Activated CD8-positive, alpha-beta T cell treated with anti-CD3 and anti-CD28 coated beads, Interleukin-2, amount 10 ng/mL, durations not matched to agents 7 days and 5 days (primary cell): ENCODE measurements at regions of chr6 and their contacts with region 1.

Region 1: DNA sequence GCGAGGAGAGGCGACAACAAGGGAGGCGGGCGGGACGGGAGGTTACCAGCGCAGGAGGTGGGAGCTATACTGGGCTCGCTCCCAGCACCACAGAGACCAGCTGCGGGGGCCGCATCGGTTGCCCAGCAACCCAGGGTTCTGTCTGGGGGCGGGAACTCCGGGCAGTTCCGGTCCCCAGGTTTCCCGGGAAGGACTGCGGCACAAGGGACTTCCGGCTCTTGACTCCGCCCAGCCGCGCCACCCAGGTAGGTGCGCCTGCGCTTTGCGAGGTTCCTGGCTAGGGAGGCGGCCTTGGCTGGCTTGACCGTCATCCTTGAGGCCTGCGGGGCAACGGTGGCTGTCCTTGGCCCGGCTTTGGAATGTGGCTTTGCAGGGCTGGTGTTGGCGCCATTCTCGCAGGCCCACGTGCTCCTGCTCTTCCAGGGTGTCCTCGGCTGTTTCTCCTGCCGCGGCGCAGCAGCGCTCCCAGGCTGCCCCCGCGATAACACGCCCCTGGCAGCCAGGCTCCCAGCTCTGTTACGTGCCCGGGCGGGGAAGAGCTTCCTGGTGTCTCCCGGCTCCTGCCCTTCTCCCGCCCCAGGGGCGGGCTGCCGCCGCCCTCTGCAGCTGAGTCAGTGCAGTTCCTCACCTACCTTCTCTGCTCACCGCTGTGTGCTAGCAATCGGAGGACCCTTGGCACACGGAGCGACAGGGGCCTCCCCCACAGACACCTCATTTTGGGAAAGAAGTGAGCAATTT is at the start of gene RSPH3:
- DNase-seq: peak; percentile 93
- ATAC-seq: peak; percentile 94
- H3K4me3 Mint-ChIP-seq: peak within 1 kb of the TSS; percentile 89
- H3K27ac Mint-ChIP-seq: peak within 1 kb of the TSS; percentile 81
- H3K4me1 Mint-ChIP-seq: peaks cover 35% of the 10 kb centered on the region
- H3K27me3 Mint-ChIP-seq: no peaks in the 10 kb centered on the region
- total RNA-seq, gene RSPH3: 1.4 TPM

Region 2: GRCh38 chr6:158242071-158242606 is 757.7 kb before region 1 on chr6:
- CTCF ChIA-PET with region 1: no interaction called
- POLR2A ChIA-PET with region 1: no interaction called
- DNase-seq: no peak
- ATAC-seq: peak; percentile 23
- H3K4me3 Mint-ChIP-seq: no peak overlapping the region
- H3K27ac Mint-ChIP-seq: peak overlapping the region; percentile 69
- H3K4me1 Mint-ChIP-seq: peaks cover 23% of the 10 kb centered on the region
- H3K27me3 Mint-ChIP-seq: no peaks in the 10 kb centered on the region

Region 3: DNA sequence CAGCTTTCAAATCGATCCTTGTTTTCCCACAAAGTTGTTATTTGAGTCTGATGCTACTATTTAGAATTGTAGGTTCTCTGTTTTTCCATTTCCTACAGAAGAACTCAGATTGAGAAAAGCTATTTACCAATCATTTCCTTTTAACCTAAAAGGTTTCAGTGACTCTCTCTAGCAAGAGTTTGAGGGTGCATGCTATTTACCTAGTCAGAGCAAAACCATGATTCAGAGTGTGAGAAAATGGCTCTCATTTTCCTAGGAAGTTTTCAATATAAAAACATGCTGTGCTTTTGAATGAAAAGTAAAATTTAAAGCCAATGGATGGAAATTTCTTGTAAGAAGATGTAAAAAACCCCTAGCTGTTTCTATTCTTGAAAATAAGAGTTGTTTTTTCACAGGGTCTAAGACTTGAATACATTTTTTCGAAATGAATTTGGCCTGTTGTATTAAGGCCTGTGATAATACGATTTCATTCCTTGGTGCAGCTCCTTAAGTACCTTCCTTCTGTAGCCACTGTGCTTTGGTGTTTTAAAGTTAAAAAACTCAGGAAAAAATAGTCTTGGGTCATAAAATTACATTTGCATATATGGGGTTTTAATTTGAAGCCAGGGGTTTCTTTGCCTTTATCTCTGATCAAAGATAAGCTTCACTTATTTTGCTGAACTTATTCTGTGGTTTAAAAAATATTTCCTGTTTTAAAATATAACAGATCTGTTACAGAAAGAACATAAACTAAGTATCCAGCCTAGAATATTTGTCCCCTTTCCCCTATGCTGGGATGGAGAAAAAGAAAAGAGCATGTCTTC is 18.1 kb after region 1 on chr6:
- CTCF ChIA-PET with region 1: interaction called, 10 read pairs
- POLR2A ChIA-PET with region 1: no interaction called
- DNase-seq: peak; percentile 12
- ATAC-seq: peak; percentile 71
- H3K4me3 Mint-ChIP-seq: no peak overlapping the region
- H3K27ac Mint-ChIP-seq: peak overlapping the region; percentile 52
- H3K4me1 Mint-ChIP-seq: peaks cover 29% of the 10 kb centered on the region
- H3K27me3 Mint-ChIP-seq: no peaks in the 10 kb centered on the region

Region 4: DNA sequence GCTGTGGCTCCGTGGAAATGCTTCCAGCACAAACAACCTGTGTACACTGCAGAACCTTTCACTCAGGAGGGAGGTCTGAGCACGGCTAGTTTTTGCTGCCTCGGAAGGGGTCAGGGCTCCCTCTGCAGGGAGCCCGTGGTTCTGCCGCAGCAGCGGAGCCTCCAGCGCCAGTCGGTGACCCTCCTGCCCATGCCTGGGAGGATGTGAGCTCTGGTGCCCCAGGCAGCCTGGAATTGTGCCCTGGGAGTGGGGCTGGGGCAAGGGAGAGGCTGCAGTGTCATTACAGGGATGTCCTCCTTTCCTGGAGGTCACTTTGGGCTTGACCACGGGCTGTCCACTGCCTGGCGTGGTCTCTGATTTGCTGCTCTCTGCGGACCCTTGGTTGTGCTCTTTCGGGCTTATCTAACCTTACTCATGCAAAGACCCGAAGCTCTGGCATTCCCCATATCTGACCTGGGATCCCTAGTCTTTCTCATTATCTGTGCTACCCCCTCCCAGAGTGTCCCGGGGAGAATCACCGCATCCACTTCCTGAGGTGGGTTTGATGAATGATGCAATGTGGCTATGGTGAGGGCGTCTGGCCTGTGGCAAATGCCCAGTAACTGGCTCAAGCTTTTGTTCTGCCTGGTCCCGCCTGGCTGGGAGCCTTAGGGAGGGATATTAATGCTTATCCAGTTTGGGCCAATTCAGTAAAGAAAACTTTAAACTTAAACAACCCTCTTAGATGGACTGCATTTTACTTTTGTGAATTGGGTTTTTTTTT is 104.5 kb after region 1 on chr6:
- CTCF ChIA-PET with region 1: interaction called, 522 read pairs
- POLR2A ChIA-PET with region 1: interaction called, 9 read pairs
- DNase-seq: peak; percentile 87
- ATAC-seq: peak; percentile 59
- H3K4me3 Mint-ChIP-seq: peak overlapping the region; percentile 44
- H3K27ac Mint-ChIP-seq: peak overlapping the region; percentile 93
- H3K4me1 Mint-ChIP-seq: peaks cover 84% of the 10 kb centered on the region
- H3K27me3 Mint-ChIP-seq: no peaks in the 10 kb centered on the region

Region 5: GRCh38 chr6:159110013-159110412 is 110.2 kb after region 1 on chr6:
- CTCF ChIA-PET with region 1: interaction called, 522 read pairs
- POLR2A ChIA-PET with region 1: interaction called, 9 read pairs
- DNase-seq: peak; percentile 60
- ATAC-seq: no peak
- H3K4me3 Mint-ChIP-seq: no peak overlapping the region
- H3K27ac Mint-ChIP-seq: no peak overlapping the region
- H3K4me1 Mint-ChIP-seq: peaks cover 59% of the 10 kb centered on the region
- H3K27me3 Mint-ChIP-seq: no peaks in the 10 kb centered on the region